Activated CD4-positive, alpha-beta T cell treated with anti-CD3 and anti-CD28 coated beads, Interleukin-2, amount 10 ng/mL, durations not matched to agents 24 days and 14 days (primary cell): ENCODE measurements at regions of chr18 and their contacts with region 1.

Region 1: GRCh38 chr18:36067055-36067957 is at the start of gene RPRD1A:
- DNase-seq: peak; percentile 99
- H3K4me3 Mint-ChIP-seq: peak within 1 kb of the TSS; percentile 95
- H3K27ac Mint-ChIP-seq: peak within 1 kb of the TSS; percentile 97
- H3K4me1 Mint-ChIP-seq: peaks cover 28% of the 10 kb centered on the region
- H3K27me3 Mint-ChIP-seq: peaks cover 7% of the 10 kb centered on the region
- total RNA-seq, gene RPRD1A: 24.6 and 27.4 TPM in 2 replicates

Region 2: DNA sequence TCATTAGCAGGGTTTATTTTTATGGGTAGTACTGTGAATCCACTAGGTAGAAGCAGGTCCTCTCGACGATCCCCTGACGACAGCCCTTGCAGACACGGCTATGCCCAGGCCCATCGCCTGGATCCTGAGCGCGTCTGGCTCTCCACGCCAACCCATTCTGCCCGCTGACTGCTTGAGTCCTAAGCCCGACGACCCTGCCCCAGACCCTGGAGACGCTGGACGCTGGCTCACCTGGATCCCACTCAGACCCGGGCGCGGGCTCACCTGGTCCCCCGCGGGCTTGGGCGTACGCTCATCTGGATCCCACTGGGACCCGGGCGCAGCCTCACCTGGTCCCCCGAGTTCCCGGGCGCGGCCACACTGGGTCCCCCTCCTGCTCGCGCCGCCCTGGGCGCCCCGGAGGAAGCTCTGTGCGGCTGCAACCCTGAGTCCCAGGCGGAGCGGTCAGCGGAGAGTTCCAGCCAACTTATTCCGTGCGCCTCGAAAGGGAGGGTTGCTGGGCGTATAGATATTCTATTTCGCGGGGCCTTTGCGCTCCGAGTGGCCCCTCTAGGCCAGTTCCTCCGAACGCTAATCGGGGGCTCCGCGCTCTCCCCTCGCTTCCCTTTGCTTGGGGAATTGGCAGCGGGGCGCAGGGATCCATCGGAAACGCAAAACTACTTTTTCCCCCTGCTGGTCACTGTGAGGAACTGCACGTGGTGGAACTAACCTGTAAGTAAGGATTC is 117.2 kb before region 1 on chr18:
- intact Hi-C with region 1: no loop called
- DNase-seq: peak; percentile 88
- H3K4me3 Mint-ChIP-seq: peak overlapping the region; percentile 86
- H3K27ac Mint-ChIP-seq: no peak overlapping the region
- H3K4me1 Mint-ChIP-seq: peaks cover 4% of the 10 kb centered on the region
- H3K27me3 Mint-ChIP-seq: peaks cover 18% of the 10 kb centered on the region

Region 3: DNA sequence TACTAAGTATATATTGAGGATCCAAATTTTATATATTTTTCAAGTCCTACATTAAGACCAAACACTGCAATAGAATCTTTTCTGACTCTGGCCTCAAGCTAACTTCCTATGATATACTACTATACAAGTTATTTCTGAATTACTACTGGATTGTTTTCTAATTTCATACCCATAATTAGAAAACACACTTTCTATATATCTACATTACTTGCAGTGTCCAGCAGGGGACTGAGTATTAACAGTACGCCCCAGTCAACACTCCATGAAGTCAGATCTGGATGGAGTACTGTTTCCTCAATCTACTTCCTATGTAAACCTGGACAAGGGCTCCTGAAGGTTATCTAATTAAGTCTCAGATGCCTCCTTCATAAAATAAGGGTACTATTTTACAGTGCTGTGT is 68.3 kb before region 1 on chr18:
- intact Hi-C with region 1: no loop called
- DNase-seq: no peak
- H3K4me3 Mint-ChIP-seq: no peak overlapping the region
- H3K27ac Mint-ChIP-seq: no peak overlapping the region
- H3K4me1 Mint-ChIP-seq: no peaks in the 10 kb centered on the region
- H3K27me3 Mint-ChIP-seq: no peaks in the 10 kb centered on the region

Region 4: DNA sequence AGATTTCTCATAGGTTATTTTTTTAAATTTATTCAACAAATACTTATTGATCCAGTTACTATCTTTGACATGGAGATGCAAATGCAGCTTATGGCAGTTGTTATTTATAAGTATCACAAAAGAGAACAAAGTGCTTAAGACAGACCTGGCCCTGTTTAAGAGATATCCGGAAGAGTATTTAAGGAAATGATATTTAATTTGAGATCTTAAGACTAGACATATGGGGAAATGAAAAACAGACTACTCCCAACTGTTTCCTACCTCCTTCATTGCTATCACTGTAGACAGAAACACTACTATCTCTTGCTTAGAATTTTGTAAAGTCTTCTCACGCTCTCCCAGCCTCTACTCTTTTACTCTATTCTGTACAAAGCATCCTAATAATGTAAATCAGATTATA is 35.9 kb before region 1 on chr18:
- intact Hi-C with region 1: loop called (anchors 2 kb)
- DNase-seq: no peak
- H3K4me3 Mint-ChIP-seq: no peak overlapping the region
- H3K27ac Mint-ChIP-seq: no peak overlapping the region
- H3K4me1 Mint-ChIP-seq: peaks cover 15% of the 10 kb centered on the region
- H3K27me3 Mint-ChIP-seq: no peaks in the 10 kb centered on the region

Region 5: DNA sequence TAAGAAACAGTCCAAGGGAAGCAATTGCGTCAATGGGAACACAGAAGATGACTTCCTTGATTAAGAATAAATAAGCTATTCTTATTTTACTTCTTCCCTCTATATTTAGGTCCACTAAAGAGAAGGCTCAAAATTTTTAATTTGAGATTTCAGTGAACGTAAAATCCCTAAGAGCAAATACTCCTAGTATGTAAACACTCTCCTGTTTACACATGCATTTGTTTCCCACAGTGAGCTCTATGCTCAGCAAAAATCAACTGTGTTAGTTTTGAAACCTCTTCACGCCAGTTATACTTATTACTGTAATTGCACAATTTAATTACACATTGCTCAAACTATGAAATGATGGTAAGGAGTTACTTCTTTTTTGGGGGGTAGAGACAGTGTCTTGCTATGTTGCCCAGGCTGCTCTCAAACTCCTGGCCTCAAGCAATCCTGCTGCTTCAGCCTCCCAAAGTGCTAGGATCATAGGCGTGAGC is 53.0 kb after region 1 on chr18:
- intact Hi-C with region 1: no loop called
- DNase-seq: no peak
- H3K4me3 Mint-ChIP-seq: no peak overlapping the region
- H3K27ac Mint-ChIP-seq: no peak overlapping the region
- H3K4me1 Mint-ChIP-seq: peaks cover 8% of the 10 kb centered on the region
- H3K27me3 Mint-ChIP-seq: no peaks in the 10 kb centered on the region